ENCODE measurements at regions of chr9 and their contacts with region 1.

Region 1: DNA sequence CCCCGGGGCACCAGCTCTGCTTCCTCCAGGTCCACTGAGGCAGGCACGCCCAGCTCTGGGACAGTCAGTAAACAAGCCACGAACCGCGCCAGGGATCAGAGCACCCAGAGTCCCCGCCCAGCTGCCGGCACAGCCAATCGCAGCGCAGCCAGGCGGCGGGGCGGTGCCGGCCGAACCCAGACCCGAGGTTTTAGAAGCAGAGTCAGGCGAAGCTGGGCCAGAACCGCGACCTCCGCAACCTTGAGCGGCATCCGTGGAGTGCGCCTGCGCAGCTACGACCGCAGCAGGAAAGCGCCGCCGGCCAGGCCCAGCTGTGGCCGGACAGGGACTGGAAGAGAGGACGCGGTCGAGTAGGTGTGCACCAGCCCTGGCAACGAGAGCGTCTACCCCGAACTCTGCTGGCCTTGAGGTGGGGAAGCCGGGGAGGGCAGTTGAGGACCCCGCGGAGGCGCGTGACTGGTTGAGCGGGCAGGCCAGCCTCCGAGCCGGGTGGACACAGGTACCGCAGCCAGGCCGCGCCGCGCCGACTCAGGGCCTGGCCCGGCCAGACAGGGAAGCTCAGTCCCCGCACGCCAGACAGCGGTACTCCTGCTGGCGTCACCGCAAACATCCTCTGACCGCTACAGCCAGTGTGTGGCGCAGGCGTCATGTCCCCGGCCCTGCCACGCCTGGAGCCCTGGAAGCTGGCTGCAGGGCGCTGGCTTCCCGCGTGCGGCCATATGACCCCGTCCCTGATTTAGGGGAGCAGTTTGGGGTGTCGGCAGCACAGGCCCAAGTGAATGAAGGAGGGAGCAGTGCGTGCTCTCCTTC is at the start of gene CTSL:
- DNase-seq: peak; percentile 75 to 80
- H3K4me3 ChIP-seq: peak within 1 kb of the TSS; percentile 59
- H3K27ac ChIP-seq: peak within 1 kb of the TSS; percentile 73
- H3K4me1 ChIP-seq: peaks cover 22% of the 10 kb centered on the region
- H3K27me3 ChIP-seq: no peaks in the 10 kb centered on the region
- CTCF ChIP-seq: peak; percentile 53
- total RNA-seq, gene CTSL: 82.6 and 105 TPM in 2 replicates

Region 2: DNA sequence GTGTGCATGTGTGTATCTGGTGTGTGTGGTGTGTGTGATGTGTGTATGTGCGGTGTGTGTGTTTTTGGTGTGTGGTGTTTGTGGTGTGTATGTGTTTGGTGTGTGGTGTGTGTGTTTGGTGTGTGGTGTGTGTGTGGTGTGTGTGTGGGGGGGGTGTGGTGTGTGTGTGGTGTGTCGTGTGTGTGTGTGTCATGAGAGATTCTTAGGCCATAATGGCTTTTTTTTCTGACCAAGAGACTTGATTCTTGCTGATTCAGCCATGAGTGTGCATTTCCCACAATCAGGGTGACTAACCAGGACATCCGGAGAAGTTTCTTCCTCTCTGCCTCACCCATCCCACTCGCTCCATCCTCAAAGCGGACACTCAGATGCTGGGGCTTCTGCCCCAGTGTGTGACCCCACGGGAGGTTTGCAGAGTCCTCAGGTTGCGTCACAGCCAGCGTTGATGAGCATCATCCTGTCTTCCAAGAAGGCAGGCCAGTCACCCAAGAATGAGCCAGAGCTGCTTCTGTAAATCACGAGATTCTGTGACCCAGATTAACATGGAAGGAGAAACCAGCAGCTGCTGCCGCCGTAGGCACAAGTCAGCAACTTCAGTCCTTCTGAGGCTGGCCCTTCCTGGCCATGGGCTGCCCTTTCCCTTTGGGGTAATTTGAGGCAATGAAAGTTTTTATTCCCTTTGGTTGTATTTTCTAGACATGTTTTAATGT is 12.7 kb before region 1 on chr9:
- CTCF ChIA-PET with region 1: interaction called, 5 read pairs
- POLR2A ChIA-PET with region 1: interaction called, 13 read pairs
- intact Hi-C with region 1: no loop called
- DNase-seq: peak; percentile 74 to 89
- H3K4me3 ChIP-seq: peak overlapping the region; percentile 31; the same call in 1 of the 2 replicates
- H3K27ac ChIP-seq: peak overlapping the region; percentile 92
- H3K4me1 ChIP-seq: peaks cover 37% of the 10 kb centered on the region
- H3K27me3 ChIP-seq: no peaks in the 10 kb centered on the region
- CTCF ChIP-seq: no peak

Region 3: DNA sequence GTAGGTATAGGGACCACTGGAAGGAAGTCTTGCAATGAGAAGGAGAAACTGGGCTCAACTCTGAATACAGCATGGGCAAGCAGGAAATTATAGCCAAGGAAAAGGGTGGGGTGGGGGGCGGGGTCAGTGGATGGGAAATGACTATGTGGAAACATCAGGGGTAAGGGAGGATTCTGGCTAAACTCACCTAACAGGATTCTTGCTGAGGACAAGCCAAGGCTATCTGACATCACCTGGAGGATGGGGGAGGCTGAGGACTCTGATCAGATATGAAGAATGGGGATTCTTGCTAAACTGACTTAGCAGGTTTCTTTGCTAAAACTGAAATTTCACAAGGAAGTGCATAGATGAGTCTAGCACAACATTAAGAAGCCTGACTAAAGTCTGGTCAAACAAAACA is 40.6 kb after region 1 on chr9:
- CTCF ChIA-PET with region 1: no interaction called
- POLR2A ChIA-PET with region 1: no interaction called
- intact Hi-C with region 1: loop called (anchors 1 kb)
- DNase-seq: peak; percentile 83 to 99
- H3K4me3 ChIP-seq: peak overlapping the region; percentile 42; the same call in 1 of the 2 replicates
- H3K27ac ChIP-seq: peak overlapping the region; percentile 91
- H3K4me1 ChIP-seq: peaks cover 27% of the 10 kb centered on the region
- H3K27me3 ChIP-seq: no peaks in the 10 kb centered on the region
- CTCF ChIP-seq: no peak

Region 4: GRCh38 chr9:87792831-87793288 is 66.8 kb after region 1 on chr9:
- CTCF ChIA-PET with region 1: interaction called, 6 read pairs
- POLR2A ChIA-PET with region 1: interaction called, 8 read pairs
- intact Hi-C with region 1: loop called (anchors 1 kb)
- DNase-seq: peak; percentile 90 to 98
- H3K4me3 ChIP-seq: peak overlapping the region; percentile 48; the same call in 1 of the 2 replicates
- H3K27ac ChIP-seq: peak overlapping the region; percentile 100
- H3K4me1 ChIP-seq: peaks cover 70% of the 10 kb centered on the region
- H3K27me3 ChIP-seq: no peaks in the 10 kb centered on the region
- CTCF ChIP-seq: peak; percentile 54

Region 5: GRCh38 chr9:87812375-87813118 is 86.4 kb after region 1 on chr9:
- CTCF ChIA-PET with region 1: interaction called, 3 read pairs
- POLR2A ChIA-PET with region 1: no interaction called
- intact Hi-C with region 1: loop called (anchors 1 kb)
- DNase-seq: peak; percentile 38 to 39
- H3K4me3 ChIP-seq: no peak overlapping the region
- H3K27ac ChIP-seq: no peak overlapping the region
- H3K4me1 ChIP-seq: no peaks in the 10 kb centered on the region
- H3K27me3 ChIP-seq: no peaks in the 10 kb centered on the region
- CTCF ChIP-seq: peak; percentile 98

Measured in PC-9 (cell line).